IMR-90 (cell line): ENCODE measurements at regions of chrX and their contacts with region 1.

Region 1: GRCh38 chrX:72245461-72246089 is 6.7 kb upstream of the ERCC6L start:
- DNase-seq: peak; percentile 61
- ATAC-seq: peak; percentile 90
- H3K4me3 ChIP-seq: no peak overlapping the region
- H3K27ac ChIP-seq: no peak overlapping the region
- H3K4me1 ChIP-seq: peaks cover 2% of the 10 kb centered on the region; the same call in 1 of the 2 replicates
- H3K27me3 ChIP-seq: peaks cover 11% of the 10 kb centered on the region; the same call in 1 of the 2 replicates
- CTCF ChIP-seq: peak; percentile 85
- POLR2A ChIP-seq: no peak
- RAD21 ChIP-seq: peak; percentile 89

Region 2: GRCh38 chrX:71466979-71467523 is 778.5 kb before region 1 on chrX:
- CTCF ChIA-PET with region 1: no interaction called
- POLR2A ChIA-PET with region 1: no interaction called
- dilution Hi-C with region 1: no loop called
- in situ Hi-C with region 1: no loop called
- intact Hi-C with region 1: no loop called
- DNase-seq: no peak
- ATAC-seq: no peak
- H3K4me3 ChIP-seq: no peak overlapping the region
- H3K27ac ChIP-seq: no peak overlapping the region
- H3K4me1 ChIP-seq: no peaks in the 10 kb centered on the region
- H3K27me3 ChIP-seq: no peaks in the 10 kb centered on the region
- CTCF ChIP-seq: no peak
- POLR2A ChIP-seq: no peak
- RAD21 ChIP-seq: no peak

Region 3: DNA sequence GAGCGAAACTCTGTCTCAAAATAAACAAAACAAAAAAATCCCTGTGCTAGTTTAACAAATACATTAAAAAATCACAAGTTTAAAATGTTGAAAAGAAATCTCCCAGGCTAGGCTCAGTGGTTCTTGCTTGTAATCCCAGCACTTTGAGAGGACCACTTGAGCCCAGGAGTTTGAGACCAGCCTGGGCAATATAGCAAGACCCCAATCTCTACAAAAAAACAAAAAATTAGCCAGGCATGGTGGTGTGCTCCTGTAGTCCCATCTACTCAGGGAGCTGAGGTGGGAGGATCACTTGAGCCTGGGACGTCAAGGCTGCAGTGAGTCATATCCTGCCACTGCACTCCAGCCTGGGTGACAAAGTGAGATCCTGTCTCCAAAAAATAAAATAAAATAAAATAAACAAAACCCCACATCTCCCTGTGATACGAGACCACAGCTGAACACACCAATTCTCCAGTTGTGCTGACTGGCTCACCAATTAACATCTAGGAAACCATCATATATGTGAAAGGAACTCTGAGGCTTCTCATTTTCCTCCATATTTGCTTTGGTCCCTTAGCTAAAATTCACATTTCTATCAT is 24.2 kb after region 1 on chrX:
- CTCF ChIA-PET with region 1: interaction called, 6 read pairs
- POLR2A ChIA-PET with region 1: no interaction called
- dilution Hi-C with region 1: no loop called
- in situ Hi-C with region 1: no loop called
- intact Hi-C with region 1: loop called (anchors 1 kb)
- DNase-seq: peak; percentile 83
- ATAC-seq: peak; percentile 53
- H3K4me3 ChIP-seq: no peak overlapping the region
- H3K27ac ChIP-seq: peak overlapping the region; percentile 51
- H3K4me1 ChIP-seq: peaks cover 31% of the 10 kb centered on the region
- H3K27me3 ChIP-seq: no peaks in the 10 kb centered on the region
- CTCF ChIP-seq: no peak
- POLR2A ChIP-seq: 0 out of 2 replicates have a peak, but pooled peaks have one; percentile 45
- RAD21 ChIP-seq: no peak

Region 4: GRCh38 chrX:72540318-72540717 is 294.7 kb after region 1 on chrX:
- CTCF ChIA-PET with region 1: interaction called, 3 read pairs
- POLR2A ChIA-PET with region 1: interaction called, 11 read pairs
- dilution Hi-C with region 1: no loop called
- in situ Hi-C with region 1: loop called (anchors 5 kb)
- intact Hi-C with region 1: loop called (anchors 1 kb)
- DNase-seq: peak; percentile 58
- ATAC-seq: peak; percentile 75
- H3K4me3 ChIP-seq: no peak overlapping the region
- H3K27ac ChIP-seq: no peak overlapping the region
- H3K4me1 ChIP-seq: no peaks in the 10 kb centered on the region
- H3K27me3 ChIP-seq: peaks cover 7% of the 10 kb centered on the region; the same call in 1 of the 2 replicates
- CTCF ChIP-seq: peak; percentile 46
- POLR2A ChIP-seq: no peak
- RAD21 ChIP-seq: peak; percentile 42